Ovary (tissue), 10 donors: ENCODE measurements at regions of chr5 and their contacts with region 1.

Region 1: GRCh38 chr5:17046320-17046719 is 110.2 kb upstream of the MYO10 start:
- DNase-seq: no peak
- H3K4me3 ChIP-seq: no peak overlapping the region
- H3K27ac ChIP-seq: no peak overlapping the region
- H3K4me1 ChIP-seq: no peaks in the 10 kb centered on the region
- H3K27me3 ChIP-seq: no peaks in the 10 kb centered on the region
- CTCF ChIP-seq: no peak
- EP300 ChIP-seq: no peak
- POLR2A ChIP-seq: no peak

Region 2: GRCh38 chr5:17000291-17000939 is 45.9 kb before region 1 on chr5:
- intact Hi-C with region 1: no loop called
- DNase-seq: no peak
- H3K4me3 ChIP-seq: no peak overlapping the region
- H3K27ac ChIP-seq: no peak overlapping the region
- H3K4me1 ChIP-seq: no peaks in the 10 kb centered on the region
- H3K27me3 ChIP-seq: no peaks in the 10 kb centered on the region
- CTCF ChIP-seq: no peak
- EP300 ChIP-seq: no peak
- POLR2A ChIP-seq: no peak

Region 3: DNA sequence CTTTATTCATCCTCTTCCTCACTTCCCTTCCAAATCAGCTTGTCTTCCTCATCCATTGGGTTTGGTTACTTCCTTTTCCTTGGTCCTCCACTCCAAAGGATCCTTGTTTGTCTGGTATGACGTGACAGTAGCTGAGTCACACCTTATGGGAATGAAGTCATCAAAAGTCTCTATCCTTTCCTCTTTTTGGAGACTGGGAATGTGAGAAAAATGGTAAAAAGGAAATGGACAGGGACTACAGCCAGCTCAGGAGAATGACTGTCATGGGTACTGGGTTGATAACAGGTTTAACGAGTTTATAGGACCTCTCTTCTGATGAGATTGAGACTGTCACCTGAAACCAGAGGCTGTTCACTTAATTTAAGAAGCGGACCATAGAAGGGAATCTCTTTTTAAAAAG is 34.0 kb before region 1 on chr5:
- intact Hi-C with region 1: loop called in 1 of 4 experiments (anchors 1 kb)
- DNase-seq: no peak
- H3K4me3 ChIP-seq: no peak overlapping the region
- H3K27ac ChIP-seq: no peak overlapping the region
- H3K4me1 ChIP-seq: no peaks in the 10 kb centered on the region
- H3K27me3 ChIP-seq: no peaks in the 10 kb centered on the region
- CTCF ChIP-seq: no peak
- EP300 ChIP-seq: no peak
- POLR2A ChIP-seq: no peak

Region 4: DNA sequence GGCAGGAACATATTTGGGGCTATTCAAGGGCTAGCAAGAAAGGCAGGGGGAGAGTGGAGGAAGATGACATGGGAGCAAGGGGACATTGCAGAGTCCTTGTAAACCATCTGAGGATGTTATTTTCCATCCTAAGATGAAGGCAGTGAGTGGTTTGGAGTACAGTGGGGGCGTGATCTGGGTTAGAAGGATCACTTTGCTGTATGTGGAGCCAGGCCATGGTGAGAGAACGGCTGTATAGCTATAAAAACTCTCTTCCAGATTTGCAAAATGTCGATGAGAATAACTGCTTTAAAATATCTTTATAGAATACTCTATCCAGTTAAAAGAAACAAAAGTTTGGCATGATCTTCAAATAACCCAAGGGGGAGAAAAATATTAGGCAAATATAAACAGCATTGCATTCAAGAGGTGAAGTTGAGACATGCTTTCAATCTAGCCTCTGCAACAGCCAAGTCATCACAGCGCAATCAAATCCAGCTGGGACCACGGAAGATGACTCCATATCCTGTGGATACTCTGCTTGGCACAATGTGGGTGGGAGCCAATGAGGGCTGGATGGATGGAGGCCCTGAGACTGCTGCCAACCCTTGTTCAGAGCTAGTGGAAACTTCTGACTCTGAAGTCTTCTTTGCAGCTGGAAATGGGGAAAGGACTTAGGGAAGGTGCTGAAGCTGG is 59.6 kb after region 1 on chr5:
- intact Hi-C with region 1: no loop called
- DNase-seq: no peak
- H3K4me3 ChIP-seq: no peak overlapping the region
- H3K27ac ChIP-seq: no peak overlapping the region
- H3K4me1 ChIP-seq: no peaks in the 10 kb centered on the region
- H3K27me3 ChIP-seq: no peaks in the 10 kb centered on the region
- CTCF ChIP-seq: no peak
- EP300 ChIP-seq: no peak
- POLR2A ChIP-seq: no peak